A549 (cell line): ENCODE measurements at regions of chr15 and their contacts with region 1.

Region 1: GRCh38 chr15:71575474-71576045 is 234.8 kb upstream of the NR2E3 start:
- DNase-seq: peak; percentile 25 to 30
- ATAC-seq: peak in 1 of 2 experiments; percentile 57; a peak in 3 of 6 replicates
- H3K4me3 ChIP-seq: no peak overlapping the region
- H3K27ac ChIP-seq: no peak overlapping the region
- H3K4me1 ChIP-seq: peaks cover 24% of the 10 kb centered on the region
- CTCF ChIP-seq: peak; percentile 78
- EP300 ChIP-seq: no peak
- POLR2A ChIP-seq: no peak
- RAD21 ChIP-seq: peak; percentile 71 to 79

Region 2: GRCh38 chr15:71448688-71449114 is 126.9 kb before region 1 on chr15:
- CTCF ChIA-PET with region 1: interaction called, 14 read pairs
- POLR2A ChIA-PET with region 1: no interaction called
- DNase-seq: peak; percentile 55 to 86
- ATAC-seq: peak; percentile 36 to 47; a peak in 3 of 6 replicates
- H3K4me3 ChIP-seq: no peak overlapping the region
- H3K27ac ChIP-seq: peak overlapping the region; percentile 85
- H3K4me1 ChIP-seq: peaks cover 67% of the 10 kb centered on the region
- CTCF ChIP-seq: peak; percentile 98
- EP300 ChIP-seq: no peak
- POLR2A ChIP-seq: no peak
- RAD21 ChIP-seq: peak; percentile 96 to 97

Region 3: GRCh38 chr15:71592203-71592602 is 16.6 kb after region 1 on chr15:
- CTCF ChIA-PET with region 1: interaction called, 20 read pairs
- POLR2A ChIA-PET with region 1: interaction called, 3 read pairs
- DNase-seq: no peak
- ATAC-seq: no peak
- H3K4me3 ChIP-seq: no peak overlapping the region
- H3K27ac ChIP-seq: no peak overlapping the region
- H3K4me1 ChIP-seq: peaks cover 24% of the 10 kb centered on the region
- CTCF ChIP-seq: no peak
- EP300 ChIP-seq: no peak
- POLR2A ChIP-seq: no peak
- RAD21 ChIP-seq: no peak

Region 4: GRCh38 chr15:71651750-71652186 is 76.2 kb after region 1 on chr15:
- CTCF ChIA-PET with region 1: interaction called, 18 read pairs
- POLR2A ChIA-PET with region 1: no interaction called
- DNase-seq: peak; percentile 51 to 86
- ATAC-seq: peak; percentile 72 to 94
- H3K4me3 ChIP-seq: no peak overlapping the region
- H3K27ac ChIP-seq: peak overlapping the region; percentile 22 to 69
- H3K4me1 ChIP-seq: peaks cover 8% of the 10 kb centered on the region; the same call in 2 of the 3 replicates
- CTCF ChIP-seq: peak; percentile 87
- EP300 ChIP-seq: no peak
- POLR2A ChIP-seq: no peak
- RAD21 ChIP-seq: peak; percentile 89 to 91

Region 5: GRCh38 chr15:71660501-71660900 is 84.9 kb after region 1 on chr15:
- CTCF ChIA-PET with region 1: interaction called, 11 read pairs
- POLR2A ChIA-PET with region 1: no interaction called
- DNase-seq: no peak
- ATAC-seq: no peak
- H3K4me3 ChIP-seq: no peak overlapping the region
- H3K27ac ChIP-seq: 0 out of 6 replicates have a peak overlapping the region, but pooled peaks of 1 of the 2 experiments have one; percentile 5
- H3K4me1 ChIP-seq: peaks cover 8% of the 10 kb centered on the region; the same call in 1 of the 3 replicates
- CTCF ChIP-seq: no peak
- EP300 ChIP-seq: no peak
- POLR2A ChIP-seq: no peak
- RAD21 ChIP-seq: no peak

Region 6: GRCh38 chr15:71730277-71731144 is 155.0 kb after region 1 on chr15:
- CTCF ChIA-PET with region 1: interaction called, 15 read pairs
- POLR2A ChIA-PET with region 1: no interaction called
- DNase-seq: peak; percentile 85 to 88
- ATAC-seq: peak; percentile 88 to 98
- H3K4me3 ChIP-seq: no peak overlapping the region
- H3K27ac ChIP-seq: no peak overlapping the region
- H3K4me1 ChIP-seq: peaks cover 4% of the 10 kb centered on the region; the same call in 2 of the 3 replicates
- CTCF ChIP-seq: peak; percentile 91
- EP300 ChIP-seq: no peak
- POLR2A ChIP-seq: no peak
- RAD21 ChIP-seq: peak; percentile 80 to 81